Transverse colon (tissue), 4 donors: ENCODE measurements at regions of chr14 and their contacts with region 1.

Region 1: DNA sequence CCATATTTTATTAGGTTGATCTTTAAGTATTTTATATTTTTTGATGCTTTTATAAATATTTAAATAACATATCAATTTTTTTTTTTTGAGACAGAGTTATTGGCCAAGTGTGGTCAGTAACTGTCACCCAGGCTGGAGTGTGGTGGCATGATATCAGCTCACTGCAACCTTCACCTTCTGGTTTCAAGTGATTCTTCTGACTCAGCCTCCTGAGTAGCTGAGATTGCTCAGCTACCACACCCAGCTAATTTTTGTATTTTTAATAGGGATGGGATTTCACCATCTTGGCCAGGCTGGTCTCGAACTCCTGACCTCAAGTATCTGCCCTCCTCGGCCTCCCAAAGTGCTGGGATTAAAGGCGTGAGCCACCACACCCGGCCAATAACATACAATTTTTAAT is 71.1 kb downstream of the FUT8 start:
- DNase-seq: no peak
- H3K4me3 ChIP-seq: no peak overlapping the region
- H3K27ac ChIP-seq: no peak overlapping the region
- H3K4me1 ChIP-seq: peaks cover 0 to 17% (median 0%) of the 10 kb centered on the region in 4 donors
- H3K27me3 ChIP-seq: no peaks in the 10 kb centered on the region
- CTCF ChIP-seq: no peak
- EP300 ChIP-seq: no peak
- POLR2A ChIP-seq: no peak

Region 2: GRCh38 chr14:64209444-64210131 is 1274.1 kb before region 1 on chr14:
- in situ Hi-C with region 1: no loop called
- intact Hi-C with region 1: loop called (anchors 5 kb)
- DNase-seq: peak; percentile 30
- H3K4me3 ChIP-seq: no peak overlapping the region
- H3K27ac ChIP-seq: peak overlapping the region in 2 of 4 donors; percentile 43 to 45
- H3K4me1 ChIP-seq: no peaks in the 10 kb centered on the region
- H3K27me3 ChIP-seq: no peaks in the 10 kb centered on the region
- CTCF ChIP-seq: no peak
- EP300 ChIP-seq: no peak
- POLR2A ChIP-seq: no peak

Region 3: DNA sequence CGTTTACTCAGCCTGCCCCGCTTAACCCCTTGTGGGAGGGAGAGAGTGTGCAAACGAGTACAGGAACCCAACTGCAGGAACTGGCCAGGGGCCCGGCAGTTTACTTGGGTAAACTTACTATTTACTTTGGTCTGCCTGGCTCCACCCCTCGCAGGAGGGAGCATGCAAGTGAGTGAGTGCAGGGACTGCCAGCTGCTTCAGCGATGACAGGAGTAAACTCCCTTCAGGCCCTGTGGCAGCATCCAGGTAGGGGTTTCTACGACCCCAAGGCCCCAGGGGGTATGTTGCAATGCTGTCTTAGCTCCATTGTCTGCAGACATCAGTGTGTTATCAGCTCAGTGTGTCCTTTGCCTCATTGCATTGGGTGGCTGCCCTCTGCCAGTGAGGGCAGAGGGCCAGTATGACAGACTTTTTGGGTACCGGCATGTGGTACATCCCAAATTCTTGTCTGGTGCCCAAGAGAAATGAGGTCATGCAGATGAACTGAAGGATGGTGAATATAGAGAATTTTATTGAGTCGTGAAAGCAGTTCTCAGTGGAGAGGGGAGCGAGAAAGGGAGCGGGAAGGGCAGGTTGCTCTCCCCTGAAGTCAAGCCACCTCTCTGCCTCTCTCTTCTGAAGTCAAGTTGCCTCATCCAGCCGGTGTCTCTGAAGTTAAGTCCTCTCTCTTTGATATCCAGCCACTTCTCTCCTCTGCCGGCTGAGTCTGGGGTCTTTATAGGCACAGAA is 110.7 kb after region 1 on chr14:
- in situ Hi-C with region 1: no loop called
- intact Hi-C with region 1: no loop called
- DNase-seq: peak; percentile 62
- H3K4me3 ChIP-seq: no peak overlapping the region
- H3K27ac ChIP-seq: peak overlapping the region in 1 of 4 donors; percentile 14
- H3K4me1 ChIP-seq: peaks cover 0 to 5% (median 3%) of the 10 kb centered on the region in 4 donors
- H3K27me3 ChIP-seq: no peaks in the 10 kb centered on the region
- CTCF ChIP-seq: no peak
- EP300 ChIP-seq: no peak
- POLR2A ChIP-seq: no peak